Activated naive CD4-positive, alpha-beta T cell treated with anti-CD3 and anti-CD28 coated beads for 36 hours (primary cell): ENCODE measurements at regions of chr5 and their contacts with region 1.

Region 1: GRCh38 chr5:39376293-39376714 is 12.0 kb upstream of the C9 start:
- DNase-seq: peak; percentile 65
- H3K4me3 Mint-ChIP-seq: no peak overlapping the region
- H3K27ac Mint-ChIP-seq: no peak overlapping the region
- H3K4me1 Mint-ChIP-seq: no peaks in the 10 kb centered on the region
- H3K27me3 Mint-ChIP-seq: no peaks in the 10 kb centered on the region

Region 2: DNA sequence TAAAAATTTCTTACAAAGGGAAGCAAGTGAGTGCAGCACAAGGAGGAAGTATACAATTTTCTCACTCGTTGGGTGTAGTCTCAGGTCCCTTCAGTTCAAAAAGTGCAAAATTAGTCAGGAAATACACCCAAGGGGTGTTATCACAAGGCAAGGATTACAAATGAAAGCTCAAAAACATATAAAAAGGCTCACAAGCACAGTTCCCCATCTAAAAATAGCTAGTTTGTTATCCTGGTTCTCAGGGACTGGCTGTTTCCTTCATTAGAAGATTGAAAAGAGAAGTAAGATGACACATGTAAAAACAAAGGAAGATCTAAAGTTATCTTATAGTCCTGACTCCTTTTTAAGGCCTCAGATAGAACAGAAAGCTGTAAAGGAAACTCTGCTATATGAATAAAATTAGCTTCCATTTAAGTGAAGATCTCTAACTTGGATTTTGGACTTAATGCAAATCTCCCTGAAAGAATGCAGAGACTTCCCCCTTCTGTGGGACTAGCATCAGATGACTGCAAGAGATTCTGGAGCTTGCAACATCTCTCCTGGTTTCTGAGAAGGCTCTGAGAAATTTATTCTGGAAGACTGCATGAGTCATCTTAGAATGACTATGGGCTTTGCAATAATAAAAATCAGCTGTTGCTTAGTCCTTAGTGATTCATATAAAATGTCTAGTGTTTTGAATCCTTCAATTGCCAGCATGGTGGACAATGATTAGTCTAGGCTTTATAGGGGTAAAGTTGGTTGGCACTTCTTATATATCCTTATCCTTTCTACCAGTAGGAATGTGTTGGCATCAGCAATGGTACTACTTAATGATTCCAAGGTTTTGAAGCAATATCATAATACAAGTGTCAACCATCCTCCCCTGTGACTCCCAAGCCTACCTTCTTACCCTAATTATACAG is 23.1 kb after region 1 on chr5:
- CTCF ChIA-PET with region 1: interaction called, 12 read pairs
- intact Hi-C with region 1: no loop called
- DNase-seq: no peak
- H3K4me3 Mint-ChIP-seq: no peak overlapping the region
- H3K27ac Mint-ChIP-seq: peak overlapping the region; percentile 10
- H3K4me1 Mint-ChIP-seq: peaks cover 9% of the 10 kb centered on the region
- H3K27me3 Mint-ChIP-seq: no peaks in the 10 kb centered on the region

Region 3: DNA sequence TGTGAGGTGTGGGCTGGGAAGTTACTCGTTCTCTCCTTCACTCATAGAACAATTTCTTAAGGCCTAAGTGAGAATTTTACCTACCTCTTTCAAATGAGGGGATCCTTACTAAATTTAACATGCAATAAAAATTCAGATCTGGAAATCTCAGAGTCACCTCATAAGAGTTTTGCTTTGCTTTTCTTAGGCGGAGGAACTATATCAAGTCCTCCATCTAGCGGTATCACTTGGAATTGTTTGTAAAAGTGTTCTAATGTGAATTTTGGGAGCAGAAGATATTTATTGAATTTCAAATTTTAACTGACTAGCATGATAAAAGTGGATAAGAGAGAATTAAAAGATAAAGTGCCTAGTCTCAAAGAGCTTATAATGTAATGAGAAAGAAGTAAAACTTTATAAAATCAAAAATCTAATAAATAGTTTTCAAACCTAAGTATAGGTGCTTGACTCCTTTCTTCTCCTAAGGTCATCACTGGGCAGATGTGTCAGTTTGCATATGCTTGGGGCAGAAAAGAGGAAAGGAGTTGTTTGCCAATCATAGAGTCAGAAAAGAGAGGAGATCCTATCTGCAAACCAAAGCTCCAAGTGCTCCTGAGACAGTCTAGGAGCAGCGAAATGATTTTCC is 194.2 kb after region 1 on chr5:
- CTCF ChIA-PET with region 1: interaction called, 23 read pairs
- intact Hi-C with region 1: loop called (anchors 1 kb)
- DNase-seq: no peak
- H3K4me3 Mint-ChIP-seq: no peak overlapping the region
- H3K27ac Mint-ChIP-seq: no peak overlapping the region
- H3K4me1 Mint-ChIP-seq: no peaks in the 10 kb centered on the region
- H3K27me3 Mint-ChIP-seq: peaks cover 5% of the 10 kb centered on the region